Left cardiac atrium (tissue), 4 donors: ENCODE measurements at regions of chr1 and their contacts with region 1.

Region 1: DNA sequence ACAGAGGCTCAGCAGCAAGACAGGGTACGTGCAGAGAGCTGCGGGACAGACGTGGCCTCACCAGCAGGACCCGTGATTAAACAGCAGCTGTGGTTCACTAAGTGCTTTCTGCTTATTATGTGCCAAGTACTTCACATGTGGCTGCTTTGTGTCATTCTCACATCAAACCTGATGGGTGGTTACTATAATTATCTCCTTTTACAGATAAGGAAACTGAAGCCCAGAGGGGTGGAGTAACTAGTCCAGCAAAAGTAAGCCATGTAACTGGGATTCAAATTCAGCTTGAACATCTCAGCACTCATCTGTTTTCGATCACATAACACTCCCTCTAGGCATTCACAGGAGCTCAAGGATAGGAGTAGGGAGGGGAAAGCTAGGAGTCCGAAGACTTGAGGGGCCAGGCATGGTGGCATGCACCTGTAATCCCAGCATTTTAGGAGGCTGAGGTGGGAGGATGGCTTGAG is 50.8 kb upstream of the CLIC4 start:
- DNase-seq: peak; percentile 67
- ATAC-seq: peak; percentile 85 to 90

Region 2: GRCh38 chr1:24720152-24720551 is 25.7 kb after region 1 on chr1:
- intact Hi-C with region 1: loop called in 1 of 2 experiments (anchors 1 kb)
- DNase-seq: peak; percentile 95
- ATAC-seq: peak; percentile 93 to 95